CD4-positive, alpha-beta memory T cell (primary cell): ENCODE measurements at regions of chr17 and their contacts with region 1.

Region 1: DNA sequence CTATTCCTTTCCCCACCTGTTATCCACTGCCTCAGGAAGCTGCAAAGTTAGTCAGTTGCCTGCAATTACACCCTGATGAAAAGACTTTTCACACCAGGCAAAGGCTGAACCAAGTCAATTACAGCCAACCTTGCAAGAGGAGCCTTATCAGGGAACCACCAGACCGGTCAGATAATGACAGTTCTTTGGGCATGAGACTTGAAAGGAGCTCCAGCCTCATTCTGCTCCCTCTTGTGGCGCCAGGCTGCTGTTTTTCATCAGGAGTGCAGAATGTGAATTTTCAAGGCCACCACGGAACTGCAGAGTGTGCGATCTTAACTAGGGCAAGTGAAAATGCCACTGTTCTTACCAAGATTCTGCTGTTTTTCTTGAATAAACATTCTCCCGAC is 22.5 kb downstream of the DNAI2 start:
- DNase-seq: peak in 4 of 5 donors; percentile 43 to 46 (median 44)
- H3K4me3 ChIP-seq: no peak overlapping the region
- H3K4me3 Mint-ChIP-seq: peak overlapping the region in 2 of 8 donors; percentile 27 to 35
- H3K27ac ChIP-seq: no peak overlapping the region
- H3K27ac Mint-ChIP-seq: peak overlapping the region in 6 of 7 donors; percentile 21 to 84 (median 62)
- H3K4me1 ChIP-seq: peaks cover 15% of the 10 kb centered on the region
- H3K4me1 Mint-ChIP-seq: peaks cover 17 to 30% (median 25%) of the 10 kb centered on the region in 4 donors
- H3K27me3 ChIP-seq: no peaks in the 10 kb centered on the region
- H3K27me3 Mint-ChIP-seq: no peaks in the 10 kb centered on the region

Region 2: DNA sequence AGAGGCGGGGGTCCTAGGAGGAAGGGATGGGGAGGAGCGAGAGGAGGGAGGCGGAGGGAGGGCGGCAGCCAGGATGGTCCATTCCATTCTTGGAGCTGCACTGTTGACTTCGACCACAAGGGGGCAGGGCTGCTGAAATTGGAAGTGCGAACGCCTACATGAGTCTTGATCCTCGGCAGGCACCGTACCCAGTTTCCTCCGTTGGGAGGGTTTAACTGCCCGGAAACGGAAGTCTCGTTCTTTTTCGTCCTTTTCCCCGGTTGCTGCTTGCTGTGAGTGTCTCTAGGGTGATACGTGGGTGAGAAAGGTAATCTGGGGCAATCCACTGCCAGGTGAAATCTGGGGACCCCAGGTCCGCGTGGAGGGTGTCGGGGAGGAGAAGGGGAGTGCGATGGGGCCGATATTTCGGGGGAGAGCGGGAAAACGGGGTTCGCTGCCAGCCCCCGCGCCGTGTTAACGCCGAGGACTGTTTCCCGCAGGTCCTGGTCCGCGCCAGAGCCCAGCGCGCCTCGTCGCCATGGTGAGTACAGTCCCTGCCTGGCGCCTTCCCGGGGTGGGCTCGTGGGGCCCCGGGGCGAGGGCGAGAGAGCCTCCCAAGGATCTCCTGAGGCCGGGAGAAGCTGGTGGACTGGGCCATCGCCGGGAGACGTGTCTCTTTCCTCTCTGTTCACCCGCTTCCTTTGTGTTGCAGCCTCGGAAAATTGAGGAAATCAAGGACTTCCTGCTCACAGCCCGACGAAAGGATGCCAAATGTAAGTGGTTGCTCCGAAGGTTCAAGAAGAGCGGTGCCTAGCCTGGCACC is 92.9 kb before region 1 on chr17 and contains the start of gene RPL38:
- CTCF ChIA-PET with region 1: interaction called, 230 read pairs
- POLR2A ChIA-PET with region 1: interaction called, 11 read pairs
- intact Hi-C with region 1: no loop called
- DNase-seq: peak; percentile 92 to 96 (median 94)
- H3K4me3 ChIP-seq: peak within 1 kb of the TSS; percentile 79 to 86
- H3K4me3 Mint-ChIP-seq: peak within 1 kb of the TSS; percentile 97 to 100 (median 98)
- H3K27ac ChIP-seq: peak within 1 kb of the TSS; percentile 87
- H3K27ac Mint-ChIP-seq: peak within 1 kb of the TSS; percentile 94 to 98 (median 97)
- H3K4me1 ChIP-seq: peaks cover 55% of the 10 kb centered on the region
- H3K4me1 Mint-ChIP-seq: peaks cover 25 to 48% (median 36%) of the 10 kb centered on the region in 4 donors
- H3K27me3 ChIP-seq: peaks cover 7% of the 10 kb centered on the region
- H3K27me3 Mint-ChIP-seq: peaks cover 11 to 19% of the 10 kb centered on the region in 2 donors
- total RNA-seq, gene RPL38: 2,053 to 2,073 TPM

Region 3: GRCh38 chr17:74259667-74260524 is 36.6 kb before region 1 on chr17:
- CTCF ChIA-PET with region 1: interaction called, 73 read pairs
- POLR2A ChIA-PET with region 1: interaction called, 6 read pairs
- intact Hi-C with region 1: loop called (anchors 1 kb)
- DNase-seq: no peak
- H3K4me3 ChIP-seq: no peak overlapping the region
- H3K4me3 Mint-ChIP-seq: no peak overlapping the region
- H3K27ac ChIP-seq: no peak overlapping the region
- H3K27ac Mint-ChIP-seq: peak overlapping the region in 4 of 7 donors; percentile 37 to 81 (median 64)
- H3K4me1 ChIP-seq: no peaks in the 10 kb centered on the region
- H3K4me1 Mint-ChIP-seq: peaks cover 0 to 8% (median under 1%) of the 10 kb centered on the region in 4 donors
- H3K27me3 ChIP-seq: no peaks in the 10 kb centered on the region
- H3K27me3 Mint-ChIP-seq: no peaks in the 10 kb centered on the region

Region 4: DNA sequence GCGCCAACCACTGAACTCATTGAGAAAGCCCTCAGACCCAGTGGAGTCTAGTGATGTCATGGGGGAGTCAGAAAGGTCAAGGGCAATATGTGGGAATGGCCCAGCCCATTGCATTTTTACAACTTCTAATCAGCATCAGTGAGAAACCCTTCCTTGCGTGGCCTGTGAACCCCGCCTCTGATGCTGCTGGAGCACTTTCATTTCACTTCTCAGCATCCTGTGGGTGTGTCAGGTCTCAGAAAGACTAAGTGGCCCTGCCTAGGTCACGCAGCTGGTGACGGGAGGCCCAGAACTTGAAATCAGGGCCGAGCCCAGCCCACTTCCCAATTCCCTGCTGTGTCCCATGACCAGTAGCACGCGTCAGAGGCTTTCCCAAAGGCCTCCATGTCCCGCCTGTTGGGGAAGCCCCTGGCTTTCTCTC is 16.4 kb before region 1 on chr17:
- CTCF ChIA-PET with region 1: interaction called, 205 read pairs
- POLR2A ChIA-PET with region 1: interaction called, 86 read pairs
- intact Hi-C with region 1: loop called (anchors 1 kb)
- DNase-seq: peak; percentile 72 to 81 (median 75)
- H3K4me3 ChIP-seq: peak overlapping the region in 1 of 2 donors; percentile 7
- H3K4me3 Mint-ChIP-seq: peak overlapping the region; percentile 2 to 82 (median 52)
- H3K27ac ChIP-seq: peak overlapping the region; percentile 86
- H3K27ac Mint-ChIP-seq: peak overlapping the region; percentile 89 to 99 (median 98)
- H3K4me1 ChIP-seq: peaks cover 88% of the 10 kb centered on the region
- H3K4me1 Mint-ChIP-seq: peaks cover 31 to 69% (median 51%) of the 10 kb centered on the region in 4 donors
- H3K27me3 ChIP-seq: no peaks in the 10 kb centered on the region
- H3K27me3 Mint-ChIP-seq: no peaks in the 10 kb centered on the region

Region 5: GRCh38 chr17:74361230-74362068 is 64.9 kb after region 1 on chr17 and contains the start of gene BTBD17:
- CTCF ChIA-PET with region 1: interaction called, 23 read pairs
- POLR2A ChIA-PET with region 1: interaction called, 3 read pairs
- intact Hi-C with region 1: no loop called
- DNase-seq: peak in 3 of 5 donors; percentile 20 to 33 (median 21)
- H3K4me3 ChIP-seq: no peak within 1 kb of the TSS
- H3K4me3 Mint-ChIP-seq: no peak within 1 kb of the TSS
- H3K27ac ChIP-seq: no peak within 1 kb of the TSS
- H3K27ac Mint-ChIP-seq: no peak within 1 kb of the TSS
- H3K4me1 ChIP-seq: peaks cover 9% of the 10 kb centered on the region
- H3K4me1 Mint-ChIP-seq: peaks cover 2 to 13% (median 5%) of the 10 kb centered on the region in 4 donors
- H3K27me3 ChIP-seq: peaks cover 16% of the 10 kb centered on the region
- H3K27me3 Mint-ChIP-seq: peaks cover 10 to 13% of the 10 kb centered on the region in 2 donors
- total RNA-seq, gene BTBD17: not detected